Head of caudate nucleus (tissue), 42 donors: ENCODE measurements at regions of chr3 and their contacts with region 1.

Region 1: DNA sequence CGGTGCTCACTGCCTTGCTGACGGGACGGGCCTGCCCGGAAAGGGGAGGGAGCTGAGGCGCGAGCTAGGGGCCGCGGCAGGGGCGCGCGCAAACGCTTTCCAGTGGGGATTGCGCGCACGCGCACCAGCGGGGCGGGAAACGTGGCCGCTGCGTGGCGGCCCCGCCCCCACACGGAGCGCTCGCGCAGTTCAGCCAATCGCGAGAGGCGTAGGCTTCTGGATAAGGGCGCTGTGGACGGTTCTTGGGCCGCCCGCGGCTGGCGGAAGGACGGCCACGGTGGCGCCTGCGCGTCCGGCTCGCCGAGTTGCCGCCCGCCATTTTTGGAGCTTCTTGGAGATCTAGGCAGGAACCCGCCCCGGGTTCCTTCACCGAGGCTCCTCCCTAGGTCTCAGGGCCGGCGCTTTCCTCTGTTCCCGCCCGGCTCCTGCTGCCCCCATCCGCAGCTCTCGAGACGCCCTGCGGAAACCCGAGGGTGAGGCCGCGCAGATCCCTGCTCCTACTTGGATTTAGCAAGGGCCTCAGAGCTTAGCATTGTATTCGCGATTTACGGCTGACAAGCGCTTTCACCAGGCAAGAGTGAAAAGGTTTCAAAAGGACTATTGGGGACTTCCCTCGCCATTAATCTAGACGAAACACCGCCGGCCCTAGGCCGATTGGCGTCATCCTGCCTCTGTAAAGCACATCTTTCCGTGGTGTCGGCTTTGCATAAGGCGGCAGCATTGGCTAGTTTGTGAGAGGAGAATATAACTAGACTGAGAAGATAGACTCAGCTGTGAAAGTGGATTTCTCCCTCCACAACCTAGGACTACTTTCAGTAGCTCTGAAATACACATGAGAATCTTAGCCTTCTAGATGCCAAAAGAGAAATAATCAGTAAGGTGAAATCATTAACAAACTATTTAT is 496 bp upstream of the STAG1 start:
- DNase-seq: peak; percentile 95 to 100 (median 99)

Region 2: GRCh38 chr3:136075218-136075808 is 677.4 kb before region 1 on chr3:
- intact Hi-C with region 1: loop called (anchors 5 kb)
- DNase-seq: peak; percentile 32 to 92 (median 77)

Region 3: GRCh38 chr3:136209921-136210320 is 542.8 kb before region 1 on chr3:
- intact Hi-C with region 1: no loop called
- DNase-seq: no peak

Region 4: GRCh38 chr3:136250226-136250902 is 502.3 kb before region 1 on chr3 and contains the start of gene PCCB:
- intact Hi-C with region 1: loop called (anchors 5 kb)
- DNase-seq: peak; percentile 82 to 96 (median 92)

Region 5: GRCh38 chr3:136545664-136546268 is 206.9 kb before region 1 on chr3:
- intact Hi-C with region 1: loop called (anchors 2 kb)
- DNase-seq: peak in 2 of 42 donors; percentile 4 to 44

Region 6: DNA sequence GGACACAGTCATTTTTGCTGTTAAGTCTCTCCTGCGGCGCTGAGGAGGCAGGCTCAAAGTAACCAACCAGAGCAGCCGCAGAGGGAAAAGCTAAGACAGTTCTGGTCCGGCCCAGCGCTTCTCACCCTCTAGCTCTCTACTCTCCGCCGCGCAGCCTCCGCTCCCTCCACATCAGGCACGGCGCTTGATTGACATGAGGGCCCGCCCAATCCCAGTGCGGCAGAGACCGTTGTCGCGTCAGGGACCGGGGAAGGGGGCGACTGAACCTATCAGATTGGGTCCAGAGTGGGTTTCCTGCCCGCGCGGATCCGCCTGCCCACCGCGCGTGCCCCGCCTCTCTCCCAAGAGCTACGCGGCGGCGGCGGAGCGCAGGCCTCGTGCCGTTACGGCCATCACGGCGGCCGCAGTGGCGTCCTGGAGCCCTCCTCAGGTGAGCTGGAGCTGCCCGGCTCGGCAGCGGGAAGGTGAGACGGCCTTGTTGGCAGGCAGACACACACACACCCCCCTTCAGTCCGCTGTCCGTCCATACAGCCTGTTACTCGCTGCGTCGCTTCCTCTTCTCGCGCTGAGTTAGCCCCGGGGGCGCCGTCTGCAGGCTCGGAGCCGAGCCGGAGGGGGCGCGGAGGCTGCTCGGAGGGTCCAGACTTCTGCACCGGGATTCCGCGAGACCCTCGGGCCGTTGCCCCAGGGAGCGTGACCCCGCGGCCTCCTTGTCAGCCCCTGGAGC is 109.4 kb after region 1 on chr3 and contains the start of gene NCK1:
- intact Hi-C with region 1: loop called (anchors 5 kb)
- DNase-seq: peak; percentile 99 to 100 (median 100)